Endothelial cell of umbilical vein (primary cell): ENCODE measurements at regions of chr11 and their contacts with region 1.

Region 1: DNA sequence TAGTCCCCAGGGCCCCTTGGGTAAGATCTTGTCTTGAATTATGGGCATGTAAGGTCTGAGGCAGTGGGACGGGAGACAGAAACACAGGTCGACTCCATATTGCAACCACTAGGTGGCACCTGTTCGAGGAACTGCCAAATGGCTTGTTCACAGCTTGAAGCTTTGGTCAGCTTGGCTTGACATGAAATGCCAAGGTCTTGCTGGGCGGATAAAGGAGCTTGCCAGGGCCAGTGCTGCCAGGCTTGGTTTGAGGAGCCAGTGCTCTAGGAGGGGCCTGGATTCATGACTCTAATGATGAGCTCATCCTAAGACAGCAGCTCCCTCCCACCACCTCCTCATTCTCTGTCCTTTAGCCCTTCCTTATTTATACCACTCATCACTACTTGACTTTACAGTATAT is 11.9 kb upstream of the NRIP3 start:
- DNase-seq: peak; percentile 81
- H3K4me3 ChIP-seq: no peak overlapping the region
- H3K27ac ChIP-seq: no peak overlapping the region
- H3K4me1 ChIP-seq: peaks cover 13% of the 10 kb centered on the region
- H3K27me3 ChIP-seq: peaks cover 0 to 6% of the 10 kb centered on the region in 2 experiments
- CTCF ChIP-seq: peak; percentile 80 to 85
- POLR2A ChIP-seq: no peak

Region 2: DNA sequence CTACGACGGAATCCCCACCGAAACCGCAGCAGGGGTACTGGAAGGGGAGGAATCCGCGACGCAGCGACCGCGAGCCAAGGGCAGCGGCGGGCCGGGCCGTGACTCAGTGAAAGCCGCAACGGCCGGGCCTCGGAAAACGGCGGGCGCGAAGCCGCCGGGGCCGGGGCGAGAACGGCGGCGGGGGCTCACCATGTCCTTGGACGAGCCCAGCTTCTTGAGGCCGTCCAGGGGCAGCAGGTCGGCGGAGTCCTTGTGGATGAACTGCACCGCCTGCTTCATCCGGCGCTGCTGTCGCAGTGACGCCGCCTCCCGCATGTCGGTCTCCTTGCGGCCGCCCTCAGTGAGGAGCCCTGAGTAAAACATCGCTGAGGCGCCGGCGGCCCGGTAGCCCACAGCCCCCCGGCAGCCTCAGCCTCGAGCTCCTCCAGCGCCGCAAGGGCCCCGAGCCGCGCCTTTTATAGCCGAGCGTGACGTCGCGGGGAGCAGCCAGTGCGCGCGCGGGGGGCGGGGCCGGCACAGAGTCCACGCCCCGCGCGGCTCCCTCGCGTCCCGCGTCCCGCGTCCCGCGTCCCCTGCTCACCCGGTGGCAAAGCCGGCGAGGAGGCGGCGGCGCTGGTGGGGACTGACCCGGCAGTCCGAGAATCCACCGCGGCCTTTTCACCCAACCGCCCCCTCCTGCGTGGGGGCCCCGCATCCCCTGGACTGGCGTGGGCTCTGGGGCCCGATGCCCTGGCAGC is 11.9 kb before region 1 on chr11 and contains the start of gene NRIP3:
- CTCF ChIA-PET with region 1: interaction called, 17 read pairs
- POLR2A ChIA-PET with region 1: no interaction called
- dilution Hi-C with region 1: no loop called
- intact Hi-C with region 1: no loop called
- DNase-seq: peak; percentile 58
- H3K4me3 ChIP-seq: peak within 1 kb of the TSS; percentile 18 to 57 (median 33)
- H3K27ac ChIP-seq: peak within 1 kb of the TSS; percentile 17
- H3K4me1 ChIP-seq: peaks cover 26% of the 10 kb centered on the region
- H3K27me3 ChIP-seq: peaks cover 23 to 28% of the 10 kb centered on the region in 2 experiments
- CTCF ChIP-seq: no peak
- POLR2A ChIP-seq: peak; percentile 67
- total RNA-seq, gene NRIP3: 8.4 and 9.9 TPM in 2 replicates

Region 3: GRCh38 chr11:9037046-9037780 is 21.5 kb after region 1 on chr11:
- CTCF ChIA-PET with region 1: interaction called, 12 read pairs
- POLR2A ChIA-PET with region 1: no interaction called
- dilution Hi-C with region 1: no loop called
- intact Hi-C with region 1: no loop called
- DNase-seq: no peak
- H3K4me3 ChIP-seq: no peak overlapping the region
- H3K27ac ChIP-seq: no peak overlapping the region
- H3K4me1 ChIP-seq: no peaks in the 10 kb centered on the region
- H3K27me3 ChIP-seq: peaks cover 8 to 12% of the 10 kb centered on the region in 2 experiments
- CTCF ChIP-seq: no peak
- POLR2A ChIP-seq: no peak

Region 4: DNA sequence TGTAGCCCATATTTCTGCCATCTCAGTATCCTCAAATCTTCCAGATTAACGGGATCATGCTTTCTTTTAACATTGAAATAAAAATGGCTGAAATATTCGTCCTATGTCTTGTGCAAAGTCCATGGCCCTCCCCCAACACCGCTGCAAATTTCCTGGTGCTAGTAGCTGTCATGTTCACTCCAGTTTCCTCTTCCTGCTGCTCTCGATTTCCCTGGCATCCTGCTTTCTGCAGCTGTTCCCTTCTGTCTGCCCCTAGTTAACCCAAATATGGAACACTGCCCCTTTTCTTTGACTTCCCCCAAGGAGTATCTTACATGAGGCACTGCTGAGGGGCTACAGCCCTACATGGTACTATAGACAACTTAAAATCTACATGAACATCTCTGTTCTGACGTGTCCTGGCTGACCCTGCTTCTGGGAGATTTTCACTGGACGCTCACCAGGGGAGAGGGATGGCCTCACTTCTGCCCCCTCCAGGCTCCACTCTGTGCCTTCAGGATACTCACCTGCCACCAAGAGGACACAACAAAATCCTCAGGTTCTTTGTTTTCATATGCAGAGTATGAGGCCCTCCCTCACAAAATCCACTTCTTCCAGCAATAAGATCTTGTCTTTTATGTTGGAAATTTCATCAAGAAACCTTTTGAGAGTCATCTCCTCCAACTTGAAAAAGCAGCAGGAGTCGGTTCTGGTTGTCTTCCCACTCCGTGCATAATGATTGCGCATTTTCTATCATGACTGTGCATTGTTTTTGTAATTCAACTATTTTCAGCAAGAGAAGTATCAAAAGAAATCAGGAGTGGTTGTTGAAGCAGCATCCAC is 105.2 kb after region 1 on chr11:
- CTCF ChIA-PET with region 1: interaction called, 4 read pairs
- POLR2A ChIA-PET with region 1: no interaction called
- dilution Hi-C with region 1: no loop called
- intact Hi-C with region 1: loop called (anchors 5 kb)
- DNase-seq: no peak
- H3K4me3 ChIP-seq: no peak overlapping the region
- H3K27ac ChIP-seq: no peak overlapping the region
- H3K4me1 ChIP-seq: no peaks in the 10 kb centered on the region
- H3K27me3 ChIP-seq: no peaks in the 10 kb centered on the region
- CTCF ChIP-seq: peak in 1 of 2 donors; percentile 8
- POLR2A ChIP-seq: no peak

Region 5: DNA sequence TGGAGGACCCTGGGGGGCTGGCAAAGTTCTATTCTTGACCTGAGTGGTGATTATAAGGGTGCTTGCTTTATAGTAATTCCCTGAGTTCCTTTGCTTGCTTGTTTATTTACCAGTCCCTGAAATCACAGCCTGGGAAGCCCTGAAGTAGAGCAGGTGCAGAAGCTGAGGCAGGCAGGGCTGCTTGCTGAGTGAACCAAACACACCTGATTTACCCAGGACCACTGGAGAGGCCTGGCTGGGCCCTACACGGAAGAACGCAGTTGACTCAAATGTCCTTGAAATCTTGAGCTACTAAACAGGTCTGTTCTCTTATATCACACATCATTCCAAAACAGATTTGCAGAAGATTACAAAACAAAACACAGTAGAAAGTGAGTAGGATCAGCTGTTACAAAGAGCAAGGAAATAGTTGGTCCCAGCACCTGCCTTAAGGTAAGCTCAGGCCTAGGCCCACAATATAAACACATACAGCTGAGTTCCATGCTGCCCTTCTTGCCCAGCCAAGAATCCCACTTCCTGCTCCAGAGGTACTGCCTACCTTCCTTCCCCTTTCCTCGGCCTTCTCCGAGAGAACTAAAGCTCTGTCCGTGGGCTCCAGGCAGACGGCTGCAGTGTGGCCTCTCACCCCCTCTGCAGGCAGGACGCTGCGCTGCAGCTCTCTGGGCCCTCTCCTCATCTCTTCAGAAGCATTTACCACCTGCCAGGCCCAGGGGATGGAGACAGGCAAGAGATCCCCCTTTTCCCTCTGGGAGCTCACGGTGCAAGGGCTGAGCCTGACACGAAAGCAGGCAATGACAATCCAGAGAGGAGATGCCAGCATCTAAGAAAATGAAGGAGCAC is 121.8 kb after region 1 on chr11:
- CTCF ChIA-PET with region 1: interaction called, 248 read pairs
- POLR2A ChIA-PET with region 1: no interaction called
- dilution Hi-C with region 1: no loop called
- intact Hi-C with region 1: loop called (anchors 1 kb)
- DNase-seq: peak; percentile 85
- H3K4me3 ChIP-seq: no peak overlapping the region
- H3K27ac ChIP-seq: peak overlapping the region; percentile 75
- H3K4me1 ChIP-seq: peaks cover 37% of the 10 kb centered on the region
- H3K27me3 ChIP-seq: no peaks in the 10 kb centered on the region
- CTCF ChIP-seq: peak; percentile 90 to 99
- POLR2A ChIP-seq: no peak

Region 6: DNA sequence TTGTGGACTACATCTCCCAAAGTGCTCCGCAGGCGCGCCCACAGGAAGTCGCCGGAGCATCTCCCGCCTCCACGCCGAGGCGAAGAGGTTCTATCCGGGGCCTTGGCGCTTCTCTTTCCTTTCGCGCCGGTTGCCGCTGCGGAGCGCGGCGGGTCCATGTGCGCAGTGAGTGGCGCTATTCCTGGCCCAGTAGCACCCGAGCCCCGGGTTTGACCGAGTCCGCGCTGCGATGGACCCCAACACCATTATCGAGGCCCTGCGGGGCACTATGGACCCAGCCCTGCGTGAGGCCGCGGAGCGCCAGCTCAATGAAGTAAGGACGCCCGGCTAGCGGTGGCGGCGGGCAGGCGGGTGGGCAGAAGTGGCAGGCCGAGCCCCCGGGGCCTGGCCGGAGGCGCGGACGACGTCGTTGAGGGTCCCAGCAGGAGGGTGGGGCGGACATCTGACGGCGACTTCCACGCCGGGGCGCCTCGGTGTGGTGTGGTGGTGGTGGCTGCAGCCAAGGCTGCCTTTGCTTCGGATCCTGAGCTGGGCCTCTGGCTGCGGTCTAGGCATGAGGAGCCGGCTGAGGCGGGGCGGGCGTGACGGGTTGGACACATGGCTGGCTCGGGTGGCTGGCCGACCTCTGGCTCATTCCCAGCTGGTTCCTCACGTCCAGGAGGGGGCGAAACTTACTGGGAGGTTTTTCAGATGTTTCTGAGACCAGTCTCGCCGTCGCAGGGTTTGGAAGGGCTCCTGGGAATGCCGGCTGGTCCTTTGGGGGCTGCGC is 369.0 kb after region 1 on chr11 and contains the start of gene IPO7:
- CTCF ChIA-PET with region 1: no interaction called
- POLR2A ChIA-PET with region 1: no interaction called
- dilution Hi-C with region 1: no loop called
- intact Hi-C with region 1: loop called (anchors 10 kb)
- DNase-seq: peak; percentile 90
- H3K4me3 ChIP-seq: peak within 1 kb of the TSS; percentile 65 to 90 (median 68)
- H3K27ac ChIP-seq: peak within 1 kb of the TSS; percentile 76
- H3K4me1 ChIP-seq: peaks cover 18% of the 10 kb centered on the region
- H3K27me3 ChIP-seq: no peaks in the 10 kb centered on the region
- CTCF ChIP-seq: peak; percentile 42 to 49
- POLR2A ChIP-seq: peak; percentile 86
- total RNA-seq, gene IPO7: 161 and 170 TPM in 2 replicates